Heart right ventricle (tissue), 16 donors: ENCODE measurements at regions of chr9 and their contacts with region 1.

Region 1: DNA sequence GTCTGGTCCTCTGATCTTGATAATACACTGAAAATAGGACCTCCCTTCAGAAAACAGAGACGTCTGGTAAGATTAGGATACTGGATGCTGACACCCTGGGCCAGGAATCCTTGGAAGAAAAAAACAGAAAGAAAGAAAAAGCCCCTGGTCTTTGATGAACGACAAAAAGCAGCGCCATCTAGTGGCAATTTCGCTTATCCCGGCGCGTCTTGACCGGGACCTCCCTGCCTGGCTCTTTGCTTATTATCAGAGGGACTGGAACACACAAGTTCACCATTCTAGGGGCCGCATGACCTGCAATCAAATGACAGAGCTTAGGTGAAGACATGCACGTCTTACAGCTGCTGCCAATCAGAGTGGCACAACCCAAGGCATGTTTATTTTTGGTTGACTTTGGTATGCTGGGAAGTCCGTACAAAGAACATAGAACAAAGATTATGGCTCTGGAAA is 114.9 kb upstream of the NFIB start:
- DNase-seq: peak; percentile 64 to 81
- ATAC-seq: peak; percentile 65 to 87 (median 76)
- H3K4me3 ChIP-seq: no peak overlapping the region
- H3K27ac ChIP-seq: peak overlapping the region in 5 of 10 donors; percentile 10 to 65 (median 29)
- H3K4me1 ChIP-seq: peaks cover 6 to 30% (median 14%) of the 10 kb centered on the region in 9 donors
- H3K27me3 ChIP-seq: no peaks in the 10 kb centered on the region
- CTCF ChIP-seq: peak; percentile 67 to 87 (median 82)

Region 2: GRCh38 chr9:13033959-13034693 is 1394.7 kb before region 1 on chr9:
- intact Hi-C with region 1: loop called in 2 of 10 experiments (anchors 10 kb)
- DNase-seq: peak; percentile 48 to 55
- ATAC-seq: peak; percentile 82 to 91 (median 86)
- H3K4me3 ChIP-seq: peak overlapping the region in 8 of 10 donors; percentile 10 to 38 (median 35)
- H3K27ac ChIP-seq: no peak overlapping the region
- H3K4me1 ChIP-seq: peaks cover 0 to 9% (median 0%) of the 10 kb centered on the region in 9 donors
- H3K27me3 ChIP-seq: no peaks in the 10 kb centered on the region
- CTCF ChIP-seq: peak; percentile 59 to 81 (median 77)

Region 3: GRCh38 chr9:13213337-13213736 is 1215.5 kb before region 1 on chr9:
- intact Hi-C with region 1: loop called in 1 of 10 experiments (anchors 10 kb)
- DNase-seq: no peak
- ATAC-seq: no peak
- H3K4me3 ChIP-seq: no peak overlapping the region
- H3K27ac ChIP-seq: no peak overlapping the region
- H3K4me1 ChIP-seq: peaks cover 0 to 28% (median 14%) of the 10 kb centered on the region in 9 donors
- H3K27me3 ChIP-seq: no peaks in the 10 kb centered on the region
- CTCF ChIP-seq: peak in 7 of 9 donors; percentile 31 to 54 (median 41)

Region 4: GRCh38 chr9:13351778-13352386 is 1076.9 kb before region 1 on chr9:
- intact Hi-C with region 1: loop called in 5 of 10 experiments (anchors 1 to 10 kb)
- DNase-seq: peak in 1 of 2 donors; percentile 40
- ATAC-seq: peak in 2 of 8 donors; percentile 31 to 55
- H3K4me3 ChIP-seq: no peak overlapping the region
- H3K27ac ChIP-seq: no peak overlapping the region
- H3K4me1 ChIP-seq: no peaks in the 10 kb centered on the region
- H3K27me3 ChIP-seq: no peaks in the 10 kb centered on the region
- CTCF ChIP-seq: peak; percentile 54 to 84 (median 68)

Region 5: DNA sequence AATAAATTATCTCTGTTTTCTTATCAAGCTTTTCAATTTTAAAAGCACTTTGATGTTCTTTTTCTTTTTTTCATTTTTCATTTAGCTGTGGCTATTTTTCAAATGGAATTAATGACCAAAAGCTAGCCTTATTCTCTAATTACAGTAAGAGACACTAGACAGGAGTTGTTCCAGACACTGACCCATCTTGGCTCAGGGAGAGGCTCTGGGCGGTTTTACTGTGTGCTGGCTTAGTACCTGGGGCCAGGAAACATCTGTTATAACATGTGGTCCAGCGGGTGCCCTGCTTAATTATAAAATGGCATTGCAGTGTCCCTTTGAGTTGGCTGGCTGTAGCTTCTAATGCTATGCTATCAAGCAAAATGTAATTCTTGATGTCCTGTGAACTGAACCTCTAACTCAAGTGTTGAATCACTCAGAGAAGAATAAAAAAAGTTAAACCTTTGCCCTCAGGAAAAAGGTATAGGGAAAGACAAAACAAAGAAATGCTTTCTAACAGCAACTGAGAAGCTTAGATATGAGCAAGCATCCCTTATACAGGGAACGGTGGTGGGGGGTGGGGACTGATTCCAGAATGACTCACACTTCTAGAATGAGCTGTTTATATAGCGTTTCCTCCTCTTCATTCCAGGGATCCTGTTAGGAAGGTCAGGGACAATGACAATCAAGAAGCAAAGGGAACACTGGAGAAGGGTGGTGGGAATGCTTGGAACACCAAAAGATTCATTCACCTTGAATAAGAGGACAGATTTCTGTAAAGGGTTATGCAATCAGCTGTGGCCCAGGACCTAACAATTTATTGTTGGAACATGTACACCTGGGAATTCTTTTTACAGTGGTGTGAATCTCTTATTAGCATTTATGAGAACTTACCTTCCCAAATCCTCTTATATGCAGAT is 56.1 kb before region 1 on chr9:
- intact Hi-C with region 1: no loop called
- DNase-seq: peak in 1 of 2 donors; percentile 73
- ATAC-seq: peak; percentile 80 to 98 (median 94)
- H3K4me3 ChIP-seq: no peak overlapping the region
- H3K27ac ChIP-seq: peak overlapping the region in 8 of 10 donors; percentile 42 to 75 (median 56)
- H3K4me1 ChIP-seq: peaks cover 0 to 24% (median 14%) of the 10 kb centered on the region in 9 donors
- H3K27me3 ChIP-seq: no peaks in the 10 kb centered on the region
- CTCF ChIP-seq: no peak

Region 6: GRCh38 chr9:14585730-14586473 is 157.1 kb after region 1 on chr9:
- intact Hi-C with region 1: no loop called
- DNase-seq: no peak
- ATAC-seq: peak in 1 of 8 donors; percentile 30
- H3K4me3 ChIP-seq: no peak overlapping the region
- H3K27ac ChIP-seq: no peak overlapping the region
- H3K4me1 ChIP-seq: no peaks in the 10 kb centered on the region
- H3K27me3 ChIP-seq: no peaks in the 10 kb centered on the region
- CTCF ChIP-seq: no peak